Mammary epithelial cell (primary cell): ENCODE measurements at regions of chr2 and their contacts with region 1.

Region 1: DNA sequence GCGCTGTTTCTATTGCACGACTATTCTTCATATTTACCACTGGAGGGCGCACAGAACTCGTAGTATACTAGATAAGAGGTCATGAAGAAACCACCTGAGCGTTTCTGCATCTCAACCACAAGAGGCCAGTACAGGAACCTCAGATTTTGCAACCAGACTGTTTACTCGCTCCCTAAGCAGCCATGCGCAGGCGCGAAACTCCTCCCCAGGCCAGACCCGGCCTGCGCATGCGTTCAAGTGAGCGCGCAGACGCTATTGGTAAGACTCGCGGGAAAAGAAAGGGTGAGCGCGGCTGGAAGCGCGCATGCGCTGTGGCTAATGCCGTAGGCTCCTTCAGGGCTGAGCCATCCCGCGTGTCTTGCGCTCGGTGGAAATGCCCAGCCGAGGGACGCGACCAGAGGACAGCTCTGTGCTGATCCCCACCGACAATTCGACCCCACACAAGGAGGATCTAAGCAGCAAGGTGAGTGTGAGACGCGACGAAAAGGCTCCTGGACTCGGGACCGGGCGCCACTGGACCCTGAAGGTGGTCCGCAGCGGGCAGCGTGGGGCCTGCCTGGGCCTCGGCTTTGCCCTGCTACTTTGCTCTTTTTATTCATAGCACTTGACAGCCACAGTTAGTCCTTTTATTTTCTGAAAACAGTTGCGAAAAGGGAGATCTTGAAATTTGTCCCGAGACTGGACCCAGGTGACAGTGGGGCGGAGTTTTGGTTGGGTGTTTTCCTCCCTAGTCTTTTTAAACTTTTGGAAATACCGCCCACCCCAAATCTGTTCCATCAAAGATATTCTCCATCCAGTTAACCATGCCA is at the start of gene ASNSD1:
- DNase-seq: peak; percentile 99
- H3K4me3 ChIP-seq: peak within 1 kb of the TSS; percentile 70 to 98 (median 94)
- H3K27ac ChIP-seq: peak within 1 kb of the TSS; percentile 86
- H3K4me1 ChIP-seq: peaks cover 5% of the 10 kb centered on the region
- H3K27me3 ChIP-seq: peaks cover 2% of the 10 kb centered on the region
- CTCF ChIP-seq: peak; percentile 98 to 99
- total RNA-seq, gene ASNSD1: 24.2 to 43.3 TPM

Region 2: GRCh38 chr2:189674374-189675112 is 13.2 kb after region 1 on chr2 and contains the start of gene ANKAR:
- CTCF ChIA-PET with region 1: no interaction called
- dilution Hi-C with region 1: no loop called
- in situ Hi-C with region 1: no loop called
- intact Hi-C with region 1: loop called (anchors 1 kb)
- DNase-seq: peak; percentile 77
- H3K4me3 ChIP-seq: peak within 1 kb of the TSS; percentile 45 to 72 (median 60)
- H3K27ac ChIP-seq: peak within 1 kb of the TSS; percentile 50
- H3K4me1 ChIP-seq: peaks cover 14% of the 10 kb centered on the region
- H3K27me3 ChIP-seq: no peaks in the 10 kb centered on the region
- CTCF ChIP-seq: peak; percentile 42 to 67
- total RNA-seq, gene ANKAR: 2.5 to 6.7 TPM

Region 3: DNA sequence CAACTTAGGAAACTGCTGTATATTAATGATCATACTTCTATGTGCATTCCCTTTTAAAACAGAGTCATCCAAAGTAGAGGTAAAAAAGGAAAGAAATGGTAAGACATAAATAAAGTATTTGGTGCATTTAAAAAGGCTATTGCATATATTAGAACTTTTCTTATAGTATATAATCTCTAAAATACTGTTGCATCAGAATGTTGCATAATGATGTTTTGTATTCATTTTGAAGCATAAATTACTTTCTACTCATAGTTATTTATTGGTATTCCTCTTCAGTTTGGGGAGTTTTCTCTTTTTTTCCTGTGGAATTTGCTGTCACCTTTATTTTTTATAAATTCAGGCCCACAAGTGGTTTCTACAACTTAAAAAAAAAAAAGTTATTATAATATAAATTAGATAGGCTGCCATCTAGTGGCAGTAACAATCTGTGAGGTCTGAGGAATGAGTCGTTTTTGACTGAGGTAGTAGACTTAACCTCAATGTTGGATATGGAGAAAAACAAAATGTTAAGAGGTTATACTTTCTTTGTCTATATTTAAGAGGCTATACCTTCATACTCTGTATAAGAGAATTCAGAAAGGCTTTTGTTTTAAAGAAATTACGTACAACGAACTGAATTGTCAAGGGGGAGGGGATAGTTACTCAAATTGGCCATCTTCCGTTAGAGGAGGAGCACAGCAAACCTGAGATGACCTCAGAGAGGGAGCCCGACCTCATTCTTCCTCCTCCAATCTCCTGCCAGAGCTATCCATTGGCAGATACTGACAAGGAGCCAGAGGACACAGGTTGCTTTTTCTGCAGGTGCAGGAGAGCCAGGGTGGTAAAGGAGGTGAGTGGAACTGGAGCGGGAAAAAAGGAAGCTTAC is 36.9 kb after region 1 on chr2:
- CTCF ChIA-PET with region 1: interaction called, 7 read pairs
- dilution Hi-C with region 1: no loop called
- in situ Hi-C with region 1: no loop called
- intact Hi-C with region 1: loop called (anchors 1 kb)
- DNase-seq: peak; percentile 19
- H3K4me3 ChIP-seq: no peak overlapping the region
- H3K27ac ChIP-seq: no peak overlapping the region
- H3K4me1 ChIP-seq: no peaks in the 10 kb centered on the region
- H3K27me3 ChIP-seq: no peaks in the 10 kb centered on the region
- CTCF ChIP-seq: peak; percentile 48

Region 4: GRCh38 chr2:189762551-189763298 is 101.4 kb after region 1 on chr2 and contains the start of gene OSGEPL1:
- CTCF ChIA-PET with region 1: interaction called, 3 read pairs
- dilution Hi-C with region 1: no loop called
- in situ Hi-C with region 1: no loop called
- intact Hi-C with region 1: loop called (anchors 1 kb)
- DNase-seq: peak; percentile 94
- H3K4me3 ChIP-seq: peak within 1 kb of the TSS; percentile 66 to 96 (median 92)
- H3K27ac ChIP-seq: peak within 1 kb of the TSS; percentile 70
- H3K4me1 ChIP-seq: peaks cover 6% of the 10 kb centered on the region
- H3K27me3 ChIP-seq: no peaks in the 10 kb centered on the region
- CTCF ChIP-seq: peak; percentile 26 to 65
- total RNA-seq, gene OSGEPL1: 4.6 to 8.8 TPM

Region 5: GRCh38 chr2:189783927-189784867 is 122.8 kb after region 1 on chr2 and contains the starts of genes ORMDL1 and PMS1:
- CTCF ChIA-PET with region 1: interaction called, 4 read pairs
- dilution Hi-C with region 1: no loop called
- in situ Hi-C with region 1: no loop called
- intact Hi-C with region 1: loop called (anchors 5 kb)
- DNase-seq: peak; percentile 96
- H3K4me3 ChIP-seq: peak within 1 kb of the TSS; percentile 77 to 93 (median 84)
- H3K27ac ChIP-seq: peak within 1 kb of the TSS; percentile 72
- H3K4me1 ChIP-seq: peaks cover 17% of the 10 kb centered on the region
- H3K27me3 ChIP-seq: no peaks in the 10 kb centered on the region
- CTCF ChIP-seq: no peak
- total RNA-seq, gene ORMDL1: 44.3 to 56.2 TPM
- total RNA-seq, gene PMS1: 21.2 to 26.3 TPM